ENCODE measurements at regions of chr4 and their contacts with region 1.

Region 1: DNA sequence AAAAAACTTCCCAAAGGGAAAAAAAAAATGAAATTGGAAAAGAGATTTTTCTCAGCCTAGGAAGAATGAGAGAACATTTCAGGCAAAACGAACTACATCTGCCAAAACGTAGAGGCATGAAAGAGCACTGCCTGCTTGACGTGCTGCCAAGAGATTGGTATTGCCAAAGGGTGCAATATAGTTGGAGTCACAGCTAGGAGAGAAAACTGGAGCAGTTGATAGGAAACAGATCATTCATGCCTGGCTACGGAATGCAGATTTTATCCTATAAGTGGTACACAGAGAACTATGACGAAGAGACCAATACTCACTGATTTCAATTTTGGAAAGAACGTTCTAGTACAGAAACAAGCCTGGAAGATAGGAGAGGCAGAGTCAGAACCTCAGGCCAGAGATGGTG is 68.4 kb upstream of the IQCM start:
- DNase-seq: peak; percentile 46
- H3K4me3 ChIP-seq: no peak overlapping the region
- H3K27ac ChIP-seq: peak overlapping the region in 1 of 4 donors; percentile 8
- H3K4me1 ChIP-seq: peaks cover 0 to 14% (median 9%) of the 10 kb centered on the region in 4 donors
- H3K27me3 ChIP-seq: no peaks in the 10 kb centered on the region
- CTCF ChIP-seq: no peak
- EP300 ChIP-seq: no peak
- POLR2A ChIP-seq: no peak

Region 2: DNA sequence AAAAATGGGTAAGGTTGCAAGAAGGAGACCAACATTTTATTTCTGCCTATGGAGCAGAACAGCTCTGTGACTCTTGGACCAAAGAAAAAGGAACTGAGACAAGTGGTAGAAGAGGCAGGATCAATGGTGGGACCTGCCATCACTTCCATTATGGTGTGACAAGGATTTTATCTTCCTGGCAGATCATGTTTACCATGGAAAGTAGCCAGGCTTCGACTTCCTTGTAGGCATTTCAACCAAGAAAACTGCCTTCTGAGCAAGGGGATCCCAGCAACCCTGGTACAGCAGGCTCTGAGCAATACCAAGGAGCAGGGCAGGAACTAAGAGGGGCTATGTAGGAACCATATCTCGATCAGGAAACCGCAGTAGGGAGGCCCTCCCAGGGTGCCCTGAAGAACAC is 385.8 kb before region 1 on chr4:
- in situ Hi-C with region 1: no loop called
- intact Hi-C with region 1: no loop called
- DNase-seq: no peak
- H3K4me3 ChIP-seq: no peak overlapping the region
- H3K27ac ChIP-seq: no peak overlapping the region
- H3K4me1 ChIP-seq: no peaks in the 10 kb centered on the region
- H3K27me3 ChIP-seq: no peaks in the 10 kb centered on the region
- CTCF ChIP-seq: no peak
- EP300 ChIP-seq: no peak
- POLR2A ChIP-seq: no peak

Region 3: DNA sequence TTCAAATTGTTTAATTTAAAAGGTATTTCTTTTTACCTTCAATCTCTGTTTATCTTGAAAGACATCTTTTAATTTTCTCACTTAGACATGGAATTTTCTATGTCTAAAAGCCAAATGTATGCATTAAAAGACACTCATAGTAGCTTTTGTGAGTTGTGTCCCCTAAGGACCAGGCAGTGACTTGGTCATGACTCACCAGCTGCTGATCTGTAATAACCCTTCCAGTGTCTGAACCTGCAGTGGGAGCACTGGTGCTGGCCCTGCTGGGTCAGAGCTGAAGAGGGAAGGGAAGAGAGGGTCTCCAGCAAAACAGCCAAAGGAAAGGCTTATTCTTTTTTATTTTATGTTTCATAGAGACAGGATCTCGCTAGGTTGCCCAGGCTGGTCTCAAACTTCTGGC is 1472.5 kb after region 1 on chr4:
- in situ Hi-C with region 1: no loop called
- intact Hi-C with region 1: loop called (anchors 5 kb)
- DNase-seq: no peak
- H3K4me3 ChIP-seq: no peak overlapping the region
- H3K27ac ChIP-seq: no peak overlapping the region
- H3K4me1 ChIP-seq: peaks cover 0 to 15% (median 7%) of the 10 kb centered on the region in 4 donors
- H3K27me3 ChIP-seq: no peaks in the 10 kb centered on the region
- CTCF ChIP-seq: no peak
- EP300 ChIP-seq: no peak
- POLR2A ChIP-seq: no peak